ENCODE measurements at regions of chr5 and their contacts with region 1.

Region 1: DNA sequence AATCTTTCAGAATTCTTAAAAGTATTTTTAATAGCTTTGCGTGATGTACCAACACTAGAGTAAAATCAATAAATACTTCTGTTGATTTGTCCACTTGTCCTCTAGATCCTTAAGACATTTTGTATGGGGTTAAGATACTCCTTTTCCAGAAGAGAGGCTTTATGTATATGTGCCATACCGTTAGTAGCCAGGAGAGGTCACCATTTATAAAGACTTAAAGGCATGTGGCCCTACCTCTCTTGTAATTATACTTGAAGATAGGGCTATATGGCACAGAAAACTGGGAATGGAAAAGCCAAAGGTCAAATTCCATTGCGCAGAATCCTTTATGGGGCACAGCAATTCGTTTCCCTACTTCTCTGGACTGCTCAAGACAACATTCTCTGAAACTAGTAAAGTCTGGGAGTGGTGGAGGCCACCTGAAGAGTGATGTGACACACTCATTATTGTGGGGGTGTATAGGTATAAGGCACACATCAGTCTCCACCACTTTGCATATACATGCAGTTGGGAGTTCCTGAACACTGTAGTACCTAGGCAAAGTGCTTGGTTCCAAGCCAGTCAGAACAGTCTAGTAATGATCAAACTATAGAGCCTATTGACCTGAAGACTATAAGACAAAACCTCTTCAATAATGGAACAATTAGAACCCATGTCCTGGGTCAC is 140.1 kb upstream of the FBXL17 start:
- DNase-seq: peak; percentile 57
- ATAC-seq: peak; percentile 88
- H3K4me3 ChIP-seq: no peak overlapping the region
- H3K27ac ChIP-seq: peak overlapping the region; percentile 54
- H3K4me1 ChIP-seq: peaks cover 14% of the 10 kb centered on the region
- H3K27me3 ChIP-seq: no peaks in the 10 kb centered on the region
- CTCF ChIP-seq: peak; percentile 54 to 70 (median 69); a peak in 5 of 6 replicates
- EP300 ChIP-seq: no peak
- POLR2A ChIP-seq: no peak
- RAD21 ChIP-seq: peak; percentile 83

Region 2: DNA sequence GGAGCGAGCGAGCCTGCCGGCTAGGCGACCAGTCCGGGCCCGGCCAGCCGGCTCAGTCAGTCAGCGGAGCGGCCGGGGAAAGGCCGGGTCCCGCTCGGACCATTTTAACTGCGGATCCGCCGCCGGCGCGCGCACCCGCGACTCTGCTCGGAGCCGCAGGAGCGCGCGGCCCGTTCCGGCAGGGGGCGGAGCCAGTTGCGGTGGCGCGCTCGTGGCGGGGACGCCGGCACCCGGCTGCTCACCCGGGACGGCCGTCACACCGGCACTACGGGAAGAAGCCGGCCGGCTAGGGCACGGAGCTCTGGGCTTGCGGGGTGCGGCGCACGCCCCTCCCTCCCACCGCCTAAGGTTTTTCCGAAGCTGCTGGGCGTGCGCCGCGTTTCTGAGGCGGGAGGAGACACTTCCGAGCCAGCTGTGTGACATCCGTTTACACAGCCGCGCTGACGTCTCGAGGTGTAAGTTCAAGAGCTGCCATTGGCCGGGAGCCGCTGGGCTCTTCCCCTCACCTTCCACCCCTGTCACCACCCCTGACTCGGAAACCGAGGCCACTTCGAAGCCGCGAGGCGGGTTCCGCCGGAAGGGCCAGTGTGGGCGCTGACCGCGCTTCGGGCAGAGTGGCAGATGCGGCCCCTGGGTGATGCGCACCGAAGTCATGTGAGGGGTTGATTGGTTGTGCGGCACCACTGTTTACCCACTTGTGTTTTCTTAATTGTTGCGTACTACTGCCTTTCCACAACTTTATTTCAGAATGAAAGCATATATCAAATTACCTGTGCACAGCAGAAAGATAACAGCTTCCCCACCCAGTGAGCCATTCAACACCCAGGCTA is 139.8 kb before region 1 on chr5 and contains the start of gene FBXL17:
- CTCF ChIA-PET with region 1: no interaction called
- POLR2A ChIA-PET with region 1: no interaction called
- RAD21 ChIA-PET with region 1: no interaction called
- SMC1A ChIA-PET with region 1: interaction called, 3 read pairs
- in situ Hi-C with region 1: no loop called
- intact Hi-C with region 1: loop called (anchors 5 kb)
- DNase-seq: peak; percentile 73
- ATAC-seq: peak; percentile 82
- H3K4me3 ChIP-seq: peak within 1 kb of the TSS; percentile 76
- H3K27ac ChIP-seq: peak within 1 kb of the TSS; percentile 94
- H3K4me1 ChIP-seq: 0 out of 2 replicates have a peak, but pooled peaks cover 2% of the 10 kb centered on the region
- H3K27me3 ChIP-seq: no peaks in the 10 kb centered on the region
- CTCF ChIP-seq: no peak
- EP300 ChIP-seq: peak; percentile 28 to 54; a peak in 1 of 4 replicates
- POLR2A ChIP-seq: peak; percentile 91
- RAD21 ChIP-seq: no peak
- polyA plus RNA-seq, gene FBXL17: 0.88 to 2.1 TPM

Region 3: GRCh38 chr5:108588323-108588722 is 66.3 kb after region 1 on chr5:
- CTCF ChIA-PET with region 1: no interaction called
- POLR2A ChIA-PET with region 1: no interaction called
- RAD21 ChIA-PET with region 1: no interaction called
- SMC1A ChIA-PET with region 1: no interaction called
- in situ Hi-C with region 1: no loop called
- intact Hi-C with region 1: no loop called
- DNase-seq: no peak
- ATAC-seq: no peak
- H3K4me3 ChIP-seq: no peak overlapping the region
- H3K27ac ChIP-seq: no peak overlapping the region
- H3K4me1 ChIP-seq: no peaks in the 10 kb centered on the region
- H3K27me3 ChIP-seq: no peaks in the 10 kb centered on the region
- CTCF ChIP-seq: no peak
- EP300 ChIP-seq: no peak
- POLR2A ChIP-seq: no peak
- RAD21 ChIP-seq: no peak

Region 4: GRCh38 chr5:108625654-108626053 is 103.7 kb after region 1 on chr5:
- CTCF ChIA-PET with region 1: no interaction called
- POLR2A ChIA-PET with region 1: no interaction called
- RAD21 ChIA-PET with region 1: no interaction called
- SMC1A ChIA-PET with region 1: no interaction called
- in situ Hi-C with region 1: no loop called
- intact Hi-C with region 1: no loop called
- DNase-seq: no peak
- ATAC-seq: peak; percentile 31; the same call in 2 of the 3 replicates
- H3K4me3 ChIP-seq: no peak overlapping the region
- H3K27ac ChIP-seq: no peak overlapping the region
- H3K4me1 ChIP-seq: no peaks in the 10 kb centered on the region
- H3K27me3 ChIP-seq: no peaks in the 10 kb centered on the region
- CTCF ChIP-seq: no peak
- EP300 ChIP-seq: no peak
- POLR2A ChIP-seq: no peak
- RAD21 ChIP-seq: no peak

Region 5: GRCh38 chr5:108911055-108911454 is 389.1 kb after region 1 on chr5:
- CTCF ChIA-PET with region 1: no interaction called
- POLR2A ChIA-PET with region 1: no interaction called
- RAD21 ChIA-PET with region 1: no interaction called
- SMC1A ChIA-PET with region 1: no interaction called
- in situ Hi-C with region 1: no loop called
- intact Hi-C with region 1: loop called (anchors 5 kb)
- DNase-seq: no peak
- ATAC-seq: peak; percentile 91
- H3K4me3 ChIP-seq: no peak overlapping the region
- H3K27ac ChIP-seq: no peak overlapping the region
- H3K4me1 ChIP-seq: no peaks in the 10 kb centered on the region
- H3K27me3 ChIP-seq: no peaks in the 10 kb centered on the region
- CTCF ChIP-seq: no peak
- EP300 ChIP-seq: peak; percentile 70 to 83; a peak in 3 of 4 replicates
- POLR2A ChIP-seq: no peak
- RAD21 ChIP-seq: no peak

Region 6: DNA sequence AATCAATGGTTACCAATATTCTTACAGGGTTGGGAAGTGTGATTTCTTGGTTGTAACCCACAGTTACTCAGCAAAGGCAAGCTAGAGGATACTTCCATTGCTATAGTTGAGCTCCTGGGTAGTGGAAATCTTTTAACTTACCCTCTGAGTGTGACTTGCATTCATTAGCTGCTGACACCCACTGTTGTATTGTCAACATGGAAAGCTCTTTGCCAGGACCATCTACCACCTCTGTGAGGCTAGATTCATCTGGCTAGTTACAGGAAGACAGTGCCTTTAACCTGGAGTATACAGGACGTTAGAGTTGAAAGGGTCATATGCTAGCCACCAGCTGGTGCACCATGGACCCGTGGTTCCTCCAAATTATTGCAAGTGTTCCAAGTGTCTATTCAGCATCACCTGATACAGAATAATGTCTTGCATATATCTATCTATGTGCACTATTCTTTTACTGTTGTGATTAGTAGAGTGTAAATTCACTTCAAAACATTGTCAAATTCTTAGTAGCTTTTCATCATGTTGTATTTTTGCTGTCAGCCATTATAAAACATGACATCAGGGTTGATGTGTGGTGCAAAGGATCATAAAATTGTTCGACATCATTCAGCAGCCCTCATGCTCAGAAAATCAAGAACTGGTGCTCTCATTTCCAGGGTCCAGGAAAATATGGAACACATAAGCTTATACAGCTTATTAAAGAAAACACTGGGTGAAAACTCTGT is 648.8 kb after region 1 on chr5:
- CTCF ChIA-PET with region 1: no interaction called
- POLR2A ChIA-PET with region 1: no interaction called
- RAD21 ChIA-PET with region 1: no interaction called
- SMC1A ChIA-PET with region 1: no interaction called
- in situ Hi-C with region 1: no loop called
- intact Hi-C with region 1: loop called (anchors 2 kb)
- DNase-seq: no peak
- ATAC-seq: no peak
- H3K4me3 ChIP-seq: no peak overlapping the region
- H3K27ac ChIP-seq: no peak overlapping the region
- H3K4me1 ChIP-seq: no peaks in the 10 kb centered on the region
- H3K27me3 ChIP-seq: no peaks in the 10 kb centered on the region
- CTCF ChIP-seq: no peak
- EP300 ChIP-seq: no peak
- POLR2A ChIP-seq: no peak
- RAD21 ChIP-seq: no peak

Region 7: GRCh38 chr5:109479260-109479860 is 957.4 kb after region 1 on chr5:
- CTCF ChIA-PET with region 1: no interaction called
- POLR2A ChIA-PET with region 1: no interaction called
- RAD21 ChIA-PET with region 1: interaction called, 3 read pairs
- SMC1A ChIA-PET with region 1: interaction called, 3 read pairs
- in situ Hi-C with region 1: no loop called
- intact Hi-C with region 1: loop called (anchors 1 kb)
- DNase-seq: no peak
- ATAC-seq: peak; percentile 60; the same call in 2 of the 3 replicates
- H3K4me3 ChIP-seq: no peak overlapping the region
- H3K27ac ChIP-seq: no peak overlapping the region
- H3K4me1 ChIP-seq: no peaks in the 10 kb centered on the region
- H3K27me3 ChIP-seq: 0 out of 4 replicates have a peak, but pooled peaks cover 0 to 4% of the 10 kb centered on the region in 2 experiments
- CTCF ChIP-seq: peak; percentile 29 to 54 (median 34); a peak in 3 of 6 replicates
- EP300 ChIP-seq: no peak
- POLR2A ChIP-seq: no peak
- RAD21 ChIP-seq: peak; percentile 52